PC-3 (cell line): ENCODE measurements at regions of chr16 and their contacts with region 1.

Region 1: GRCh38 chr16:64440421-64440831 is 681.4 kb downstream of the CDH11 start:
- DNase-seq: peak; percentile 90
- ATAC-seq: peak; percentile 97
- H3K4me3 ChIP-seq: peak overlapping the region; percentile 40; the same call in 1 of the 2 replicates
- H3K27ac ChIP-seq: peak overlapping the region; percentile 91
- H3K4me1 ChIP-seq: peaks cover 21% of the 10 kb centered on the region
- H3K27me3 ChIP-seq: no peaks in the 10 kb centered on the region
- CTCF ChIP-seq: no peak

Region 2: DNA sequence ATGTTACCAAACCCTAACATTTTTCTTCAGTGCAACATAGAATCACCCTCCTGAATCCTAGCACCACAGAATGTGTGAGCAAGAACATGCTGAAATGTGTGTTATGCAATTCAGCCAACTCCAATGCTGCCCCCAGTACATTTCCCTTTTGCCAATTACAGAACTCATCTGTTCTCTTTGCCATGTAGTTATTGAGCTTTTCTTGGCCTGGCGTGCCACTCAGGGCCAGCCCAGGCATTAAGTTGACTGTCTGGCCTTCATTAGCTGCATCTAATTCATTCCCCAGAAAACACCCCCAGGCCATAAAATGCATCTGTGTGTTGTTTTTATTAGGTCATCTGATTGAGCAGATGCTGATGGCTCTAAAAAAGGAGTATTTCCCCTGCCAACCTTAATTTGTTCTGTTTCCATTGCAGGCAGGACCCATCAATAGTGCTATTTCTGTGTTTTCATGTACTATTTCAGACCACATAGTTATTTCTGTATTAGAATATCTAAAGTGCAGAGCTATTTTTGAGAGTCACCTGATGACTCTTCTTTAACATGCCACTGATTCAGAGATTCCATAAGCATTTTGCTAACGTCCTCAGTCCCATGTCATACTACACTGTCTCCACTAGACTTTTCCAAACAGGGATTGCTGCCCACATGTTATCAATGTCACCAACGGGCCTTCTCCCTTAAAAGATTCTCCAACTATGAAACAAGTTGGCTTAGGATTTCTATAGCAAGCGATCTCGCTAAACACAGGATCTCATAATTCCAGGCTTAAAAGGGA is 288.2 kb before region 1 on chr16:
- CTCF ChIA-PET with region 1: no interaction called
- POLR2A ChIA-PET with region 1: no interaction called
- intact Hi-C with region 1: loop called (anchors 10 kb)
- DNase-seq: no peak
- ATAC-seq: no peak
- H3K4me3 ChIP-seq: no peak overlapping the region
- H3K27ac ChIP-seq: no peak overlapping the region
- H3K4me1 ChIP-seq: peaks cover 28% of the 10 kb centered on the region
- H3K27me3 ChIP-seq: no peaks in the 10 kb centered on the region
- CTCF ChIP-seq: no peak

Region 3: GRCh38 chr16:64238571-64238970 is 201.9 kb before region 1 on chr16:
- CTCF ChIA-PET with region 1: no interaction called
- POLR2A ChIA-PET with region 1: no interaction called
- intact Hi-C with region 1: loop called (anchors 5 kb)
- DNase-seq: peak; percentile 74
- ATAC-seq: peak; percentile 80
- H3K4me3 ChIP-seq: no peak overlapping the region
- H3K27ac ChIP-seq: peak overlapping the region; percentile 58
- H3K4me1 ChIP-seq: peaks cover 12% of the 10 kb centered on the region
- H3K27me3 ChIP-seq: no peaks in the 10 kb centered on the region
- CTCF ChIP-seq: no peak

Region 4: DNA sequence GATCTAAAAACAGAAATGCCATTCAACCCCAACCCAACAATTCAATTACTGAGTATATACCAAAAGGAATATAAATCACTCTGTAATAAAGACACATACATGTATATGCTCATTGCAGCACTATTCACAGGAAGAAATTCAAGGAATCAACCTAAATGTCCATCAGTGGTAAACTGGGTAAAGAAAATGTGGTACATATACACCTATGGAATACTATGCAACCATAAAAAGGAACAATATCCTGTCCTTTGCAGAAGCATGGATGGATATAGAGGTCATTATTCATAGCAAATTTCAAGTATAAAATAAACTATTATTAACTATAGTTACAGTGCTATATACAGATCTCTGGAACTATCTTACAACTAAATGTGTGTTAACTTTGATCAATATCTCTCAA is 82.1 kb after region 1 on chr16:
- CTCF ChIA-PET with region 1: no interaction called
- POLR2A ChIA-PET with region 1: no interaction called
- intact Hi-C with region 1: no loop called
- DNase-seq: no peak
- ATAC-seq: no peak
- H3K4me3 ChIP-seq: no peak overlapping the region
- H3K27ac ChIP-seq: no peak overlapping the region
- H3K4me1 ChIP-seq: no peaks in the 10 kb centered on the region
- H3K27me3 ChIP-seq: peaks cover 24% of the 10 kb centered on the region
- CTCF ChIP-seq: no peak